ENCODE measurements at regions of chr6 and their contacts with region 1.

Region 1: GRCh38 chr6:118881440-118882313 is 12.3 kb upstream of the ASF1A start:
- DNase-seq: no peak
- ATAC-seq: peak; percentile 73
- H3K4me3 Mint-ChIP-seq: no peak overlapping the region
- H3K27ac Mint-ChIP-seq: 0 out of 2 replicates have a peak overlapping the region, but pooled peaks have one; percentile 46
- H3K4me1 Mint-ChIP-seq: peaks cover 27% of the 10 kb centered on the region
- H3K27me3 Mint-ChIP-seq: no peaks in the 10 kb centered on the region
- CTCF ChIP-seq: no peak

Region 2: DNA sequence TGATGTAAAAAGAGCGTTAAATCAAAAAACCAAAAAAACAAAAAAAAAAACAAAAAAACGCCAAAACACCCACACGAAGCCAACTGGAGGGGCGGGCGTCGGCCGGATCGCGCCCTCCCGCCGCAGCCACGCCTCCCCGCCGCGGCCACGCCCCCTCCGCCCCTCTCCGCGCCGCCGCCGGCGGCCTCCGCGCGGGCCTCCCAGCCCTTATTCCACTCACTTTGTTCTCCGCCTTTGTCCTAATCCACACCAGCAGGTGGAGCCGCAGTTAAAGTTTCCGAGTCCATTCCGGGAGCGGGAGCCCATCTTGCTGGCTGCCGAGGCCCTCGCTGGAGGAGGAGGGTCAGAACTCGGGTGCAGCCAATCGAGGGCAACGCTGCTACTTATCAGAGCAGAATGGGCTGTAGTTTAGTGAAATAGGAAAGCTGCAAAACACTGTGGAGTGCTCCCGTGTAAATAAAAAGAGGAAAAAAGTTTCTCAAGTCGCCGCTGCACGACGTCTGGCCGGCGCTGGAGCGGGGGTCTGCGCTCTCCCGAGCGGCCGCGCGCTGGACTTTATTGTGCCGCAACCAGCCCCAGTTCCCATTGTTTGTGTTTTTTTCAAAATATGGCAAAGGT is 12.2 kb after region 1 on chr6 and contains the start of gene ASF1A:
- CTCF ChIA-PET with region 1: interaction called, 12 read pairs
- POLR2A ChIA-PET with region 1: interaction called, 20 read pairs
- DNase-seq: peak; percentile 94
- ATAC-seq: peak; percentile 84
- H3K4me3 Mint-ChIP-seq: peak within 1 kb of the TSS; percentile 88
- H3K27ac Mint-ChIP-seq: peak within 1 kb of the TSS; percentile 98
- H3K4me1 Mint-ChIP-seq: peaks cover 42% of the 10 kb centered on the region
- H3K27me3 Mint-ChIP-seq: no peaks in the 10 kb centered on the region
- CTCF ChIP-seq: no peak; the same call in 1 of the 2 replicates
- total RNA-seq, gene ASF1A: 30.9 to 36.7 TPM (median 32.0 TPM) in 3 replicates